ENCODE measurements at regions of chr1 and their contacts with region 1.

Region 1: GRCh38 chr1:61453111-61453961 is 271.6 kb downstream of the TM2D1 start:
- DNase-seq: peak; percentile 89 to 92
- ATAC-seq: peak; percentile 71 to 84 (median 74)
- H3K4me3 ChIP-seq: no peak overlapping the region
- H3K27ac ChIP-seq: peak overlapping the region; percentile 74
- H3K4me1 ChIP-seq: peaks cover 60% of the 10 kb centered on the region
- H3K27me3 ChIP-seq: no peaks in the 10 kb centered on the region
- CTCF ChIP-seq: peak; percentile 77

Region 2: DNA sequence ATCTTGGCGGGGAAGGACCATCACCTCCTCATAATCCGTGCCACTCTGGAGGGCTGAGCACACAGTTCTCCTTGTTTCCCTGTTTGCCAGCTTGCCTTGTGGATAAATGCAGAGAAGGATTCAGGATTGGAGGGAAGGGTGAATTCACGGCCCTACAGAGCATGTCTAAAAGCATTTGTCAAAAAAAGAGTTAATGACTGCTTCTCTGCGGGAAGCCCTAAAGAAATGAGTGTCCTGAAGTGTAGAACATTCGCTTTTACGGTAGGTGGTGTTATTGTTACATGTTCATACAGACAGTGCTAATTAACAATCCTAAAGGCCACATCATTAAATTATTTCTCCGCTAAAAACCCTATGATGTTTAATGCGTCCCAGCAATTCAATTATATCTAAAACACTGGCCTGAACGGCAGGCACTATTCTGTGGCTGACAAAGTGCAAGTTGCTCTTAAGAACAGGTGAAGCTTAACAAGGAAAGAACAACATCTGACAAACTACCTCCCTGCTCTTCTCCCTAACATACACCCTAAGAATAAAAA is 483.3 kb before region 1 on chr1:
- intact Hi-C with region 1: loop called (anchors 5 to 10 kb)
- DNase-seq: no peak
- ATAC-seq: peak; percentile 49 to 85 (median 67)
- H3K4me3 ChIP-seq: no peak overlapping the region
- H3K27ac ChIP-seq: no peak overlapping the region
- H3K4me1 ChIP-seq: no peaks in the 10 kb centered on the region
- H3K27me3 ChIP-seq: no peaks in the 10 kb centered on the region
- CTCF ChIP-seq: peak; percentile 56

Region 3: DNA sequence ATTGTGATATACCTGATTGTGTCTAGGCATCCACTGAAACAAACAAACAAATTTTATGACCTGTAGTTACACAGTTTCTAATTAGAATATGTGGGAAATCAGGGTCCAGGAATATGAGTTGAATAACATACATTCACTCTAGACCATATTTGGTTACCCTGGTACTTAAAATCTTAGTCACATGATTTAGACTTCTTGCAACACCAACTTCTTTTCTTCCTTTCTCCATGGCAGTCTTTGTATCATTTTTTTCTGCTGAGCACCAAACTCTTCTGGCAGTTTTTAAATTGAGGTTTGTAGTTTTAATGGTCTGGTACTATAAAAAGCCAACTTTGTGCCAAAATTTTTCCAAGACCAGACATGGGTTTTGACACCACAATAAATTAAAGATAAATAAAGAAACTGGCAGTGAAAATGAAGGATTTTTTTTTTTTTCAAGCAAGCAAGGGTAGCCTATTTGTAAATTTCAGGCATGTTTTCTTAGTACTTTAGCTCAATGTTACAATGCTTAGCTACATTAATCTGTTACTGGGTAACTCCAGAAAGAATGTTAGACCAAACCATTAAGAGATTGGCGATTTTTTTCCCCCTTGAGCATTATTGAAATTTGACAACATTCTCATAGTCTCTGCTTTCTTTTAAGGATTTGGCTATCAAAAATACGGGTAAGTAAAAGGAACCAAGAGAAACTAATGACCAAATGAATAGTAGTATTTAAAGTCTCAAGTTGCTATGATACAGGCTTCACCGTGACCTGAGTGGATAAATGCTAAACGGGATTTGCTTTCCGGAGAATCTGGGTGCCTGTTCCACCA is 262.5 kb before region 1 on chr1:
- intact Hi-C with region 1: loop called in 1 of 2 experiments (anchors 5 kb)
- DNase-seq: no peak
- ATAC-seq: no peak
- H3K4me3 ChIP-seq: no peak overlapping the region
- H3K27ac ChIP-seq: peak overlapping the region; percentile 46
- H3K4me1 ChIP-seq: peaks cover 49% of the 10 kb centered on the region
- H3K27me3 ChIP-seq: no peaks in the 10 kb centered on the region
- CTCF ChIP-seq: no peak

Region 4: DNA sequence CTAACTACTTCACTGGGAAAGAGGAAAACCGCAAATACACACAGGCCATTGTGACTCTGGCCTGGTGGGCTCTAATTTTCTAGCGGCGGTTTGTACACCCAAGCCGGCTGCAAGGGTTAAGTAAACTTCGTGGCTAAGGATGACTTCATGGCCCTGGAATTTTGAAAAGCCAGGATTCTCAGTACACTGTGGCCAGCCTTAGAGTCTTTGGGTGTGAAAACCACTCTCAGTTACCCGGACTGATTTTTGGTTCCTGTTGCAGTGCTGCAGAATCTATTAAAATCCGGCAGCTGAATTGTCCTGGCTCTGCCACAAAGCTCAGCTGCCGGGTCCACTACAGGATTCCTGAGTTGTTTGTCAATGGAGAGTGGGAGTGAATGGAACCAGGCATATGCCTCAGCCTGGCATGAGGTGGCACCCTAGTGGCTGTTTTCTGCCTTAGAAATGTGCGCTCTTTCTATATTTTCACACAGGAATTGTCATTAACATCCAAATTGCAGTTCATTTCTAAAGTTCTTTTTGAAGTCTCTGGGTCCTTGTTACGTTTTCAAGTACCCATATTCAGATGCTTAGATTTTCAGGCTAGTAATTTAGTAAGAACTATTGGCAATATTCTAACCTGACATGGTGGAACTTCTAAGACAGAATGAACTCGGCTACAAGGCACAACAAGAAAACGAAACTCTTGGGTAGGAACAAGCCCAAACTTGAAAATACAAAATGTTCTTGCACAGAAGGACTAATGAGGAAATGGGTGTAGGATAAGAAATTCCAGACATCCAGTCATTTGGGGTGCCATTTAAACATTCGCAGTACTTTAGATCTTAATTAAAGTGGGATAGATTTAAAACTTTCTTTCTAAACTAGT is 115.1 kb before region 1 on chr1:
- intact Hi-C with region 1: loop called (anchors 2 to 5 kb)
- DNase-seq: peak; percentile 71 to 84
- ATAC-seq: peak; percentile 88 to 92 (median 92)
- H3K4me3 ChIP-seq: peak overlapping the region; percentile 53
- H3K27ac ChIP-seq: peak overlapping the region; percentile 87
- H3K4me1 ChIP-seq: peaks cover 33% of the 10 kb centered on the region
- H3K27me3 ChIP-seq: no peaks in the 10 kb centered on the region
- CTCF ChIP-seq: peak; percentile 72

Region 5: GRCh38 chr1:61842871-61843514 is 389.7 kb after region 1 on chr1:
- intact Hi-C with region 1: loop called in 1 of 2 experiments (anchors 10 kb)
- DNase-seq: no peak
- ATAC-seq: no peak
- H3K4me3 ChIP-seq: no peak overlapping the region
- H3K27ac ChIP-seq: no peak overlapping the region
- H3K4me1 ChIP-seq: peaks cover 14% of the 10 kb centered on the region
- H3K27me3 ChIP-seq: no peaks in the 10 kb centered on the region
- CTCF ChIP-seq: no peak

Measured in psoas muscle (tissue), 8 donors.